ENCODE measurements at regions of chr12 and their contacts with region 1.

Region 1: DNA sequence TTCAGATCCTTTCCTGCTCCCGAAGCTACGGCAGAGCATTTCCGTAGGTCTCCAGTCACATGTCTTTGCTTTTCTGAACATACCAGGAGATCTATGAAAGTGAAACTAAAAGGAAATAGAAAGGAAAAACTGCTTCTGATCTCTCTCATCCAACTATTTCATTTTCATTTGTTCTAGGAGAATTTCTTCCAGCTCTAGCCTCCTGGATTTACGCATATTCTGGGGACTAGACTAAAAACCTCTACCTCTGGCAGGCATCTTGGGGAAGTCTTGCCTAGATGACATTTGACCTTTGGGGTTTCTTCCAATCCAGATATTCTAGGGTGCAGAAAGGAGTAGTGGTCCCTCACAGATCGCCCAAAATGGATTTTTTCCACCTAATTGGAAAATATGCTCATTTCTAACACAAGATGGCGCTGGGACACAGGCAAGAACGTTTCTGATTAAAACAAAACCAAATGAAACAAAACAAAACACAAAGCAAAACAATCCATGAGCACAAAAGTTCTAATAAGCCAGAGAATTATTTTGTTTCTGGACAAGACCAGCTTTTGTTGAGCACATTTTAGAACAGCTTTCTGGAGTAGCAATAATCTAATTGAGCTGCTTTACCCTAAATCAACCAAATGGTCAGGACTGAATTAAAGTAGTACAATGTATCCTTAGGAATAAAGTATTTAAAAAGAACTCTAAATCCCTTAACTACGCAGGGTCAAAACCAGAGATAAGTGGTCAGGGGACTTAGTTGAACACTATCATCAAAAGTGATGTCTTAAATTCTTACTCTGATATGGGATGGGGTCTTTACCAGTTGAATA is 12.3 kb upstream of the PARP11 start:
- DNase-seq: peak in 7 of 9 donors; percentile 55 to 78 (median 69)
- ATAC-seq: peak; percentile 69
- H3K4me3 ChIP-seq: no peak overlapping the region
- H3K4me3 Mint-ChIP-seq: peak overlapping the region in 7 of 10 donors; percentile 1 to 61 (median 26)
- H3K27ac ChIP-seq: no peak overlapping the region
- H3K27ac Mint-ChIP-seq: peak overlapping the region in 8 of 9 donors; percentile 45 to 93 (median 66)
- H3K4me1 ChIP-seq: no peaks in the 10 kb centered on the region
- H3K4me1 Mint-ChIP-seq: peaks cover 6 to 26% (median 16%) of the 10 kb centered on the region in 7 donors
- H3K27me3 ChIP-seq: no peaks in the 10 kb centered on the region
- H3K27me3 Mint-ChIP-seq: peaks cover 0 to 10% (median 0%) of the 10 kb centered on the region in 5 donors

Region 2: DNA sequence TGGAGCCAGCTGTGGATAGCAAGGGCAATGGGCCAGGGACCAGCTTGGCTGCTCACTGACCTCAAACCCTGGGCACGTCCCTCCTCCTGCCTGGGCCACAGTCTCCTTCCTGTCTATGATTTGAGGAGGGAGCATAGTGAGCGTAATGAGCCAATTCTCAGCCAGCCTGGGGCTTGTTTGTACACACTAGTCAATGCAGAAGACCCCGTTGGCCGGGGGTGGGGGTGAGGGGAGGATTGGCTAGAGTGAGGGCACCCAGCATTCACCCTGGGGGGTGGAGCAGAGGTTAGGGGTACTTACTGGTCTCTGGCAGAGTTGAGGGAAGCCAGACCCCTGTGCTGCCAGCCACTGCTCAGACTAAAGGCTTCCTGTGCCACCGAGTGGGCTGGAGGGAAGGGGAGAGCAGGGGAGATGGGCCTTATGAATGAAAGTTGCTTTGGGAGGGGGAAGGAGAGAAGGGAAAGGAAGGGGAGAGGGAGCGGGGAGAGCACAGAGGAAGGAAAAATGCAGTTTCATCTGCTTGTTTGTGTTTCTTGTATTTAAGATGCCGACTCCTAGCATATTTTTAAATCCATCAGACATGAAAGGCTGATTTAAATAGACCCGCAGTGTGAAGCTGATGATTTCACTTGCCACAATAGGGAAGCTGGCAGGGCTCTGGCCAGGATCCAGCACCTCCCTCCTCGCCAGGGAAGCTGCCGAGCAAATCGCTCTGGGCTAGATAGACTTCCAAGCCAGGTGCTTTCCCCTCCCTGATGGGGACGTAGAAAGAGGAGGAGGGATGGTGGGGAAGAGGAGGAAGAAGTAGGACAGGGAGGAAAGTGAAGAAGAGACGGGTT is 280.5 kb before region 1 on chr12:
- CTCF ChIA-PET with region 1: no interaction called
- POLR2A ChIA-PET with region 1: no interaction called
- intact Hi-C with region 1: no loop called
- DNase-seq: no peak
- ATAC-seq: no peak
- H3K4me3 ChIP-seq: no peak overlapping the region
- H3K4me3 Mint-ChIP-seq: no peak overlapping the region
- H3K27ac ChIP-seq: no peak overlapping the region
- H3K27ac Mint-ChIP-seq: no peak overlapping the region
- H3K4me1 ChIP-seq: no peaks in the 10 kb centered on the region
- H3K4me1 Mint-ChIP-seq: peaks cover 0 to 14% (median 6%) of the 10 kb centered on the region in 7 donors
- H3K27me3 ChIP-seq: no peaks in the 10 kb centered on the region
- H3K27me3 Mint-ChIP-seq: peaks cover 0 to 20% (median 0%) of the 10 kb centered on the region in 5 donors

Region 3: GRCh38 chr12:3896801-3897331 is 11.4 kb after region 1 on chr12:
- CTCF ChIA-PET with region 1: interaction called, 30 read pairs
- POLR2A ChIA-PET with region 1: interaction called, 28 read pairs
- intact Hi-C with region 1: loop called (anchors 1 to 2 kb)
- DNase-seq: no peak
- ATAC-seq: peak; percentile 66
- H3K4me3 ChIP-seq: peak overlapping the region; percentile 38
- H3K4me3 Mint-ChIP-seq: peak overlapping the region; percentile 68 to 89 (median 78)
- H3K27ac ChIP-seq: peak overlapping the region; percentile 71
- H3K27ac Mint-ChIP-seq: peak overlapping the region in 8 of 9 donors; percentile 94 to 98 (median 97)
- H3K4me1 ChIP-seq: peaks cover 44 to 84% of the 10 kb centered on the region in 2 donors
- H3K4me1 Mint-ChIP-seq: peaks cover 2 to 58% (median 45%) of the 10 kb centered on the region in 7 donors
- H3K27me3 ChIP-seq: no peaks in the 10 kb centered on the region
- H3K27me3 Mint-ChIP-seq: no peaks in the 10 kb centered on the region

Region 4: GRCh38 chr12:3931746-3932145 is 46.3 kb after region 1 on chr12:
- CTCF ChIA-PET with region 1: interaction called, 12 read pairs
- POLR2A ChIA-PET with region 1: interaction called, 13 read pairs
- intact Hi-C with region 1: loop called in 1 of 2 experiments (anchors 1 kb)
- DNase-seq: no peak
- ATAC-seq: no peak
- H3K4me3 ChIP-seq: no peak overlapping the region
- H3K4me3 Mint-ChIP-seq: peak overlapping the region in 3 of 10 donors; percentile 7 to 81 (median 27)
- H3K27ac ChIP-seq: no peak overlapping the region
- H3K27ac Mint-ChIP-seq: peak overlapping the region in 6 of 9 donors; percentile 51 to 89 (median 74)
- H3K4me1 ChIP-seq: peaks cover 0 to 46% of the 10 kb centered on the region in 2 donors
- H3K4me1 Mint-ChIP-seq: peaks cover 29 to 82% (median 73%) of the 10 kb centered on the region in 7 donors
- H3K27me3 ChIP-seq: no peaks in the 10 kb centered on the region
- H3K27me3 Mint-ChIP-seq: peaks cover 0 to 16% (median 0%) of the 10 kb centered on the region in 5 donors

Region 5: GRCh38 chr12:3988519-3989448 is 103.3 kb after region 1 on chr12:
- CTCF ChIA-PET with region 1: interaction called, 127 read pairs
- POLR2A ChIA-PET with region 1: interaction called, 16 read pairs
- intact Hi-C with region 1: loop called in 1 of 2 experiments (anchors 2 kb)
- DNase-seq: peak in 7 of 9 donors; percentile 33 to 71 (median 62)
- ATAC-seq: peak; percentile 87
- H3K4me3 ChIP-seq: peak overlapping the region; percentile 20
- H3K4me3 Mint-ChIP-seq: peak overlapping the region; percentile 62 to 75 (median 70)
- H3K27ac ChIP-seq: peak overlapping the region; percentile 61
- H3K27ac Mint-ChIP-seq: peak overlapping the region; percentile 81 to 95 (median 91)
- H3K4me1 ChIP-seq: peaks cover 9 to 21% of the 10 kb centered on the region in 2 donors
- H3K4me1 Mint-ChIP-seq: peaks cover 12 to 52% (median 37%) of the 10 kb centered on the region in 7 donors
- H3K27me3 ChIP-seq: no peaks in the 10 kb centered on the region
- H3K27me3 Mint-ChIP-seq: peaks cover 0 to 15% (median 0%) of the 10 kb centered on the region in 5 donors

Region 6: GRCh38 chr12:4030929-4031702 is 145.6 kb after region 1 on chr12:
- CTCF ChIA-PET with region 1: interaction called, 100 read pairs
- POLR2A ChIA-PET with region 1: interaction called, 14 read pairs
- intact Hi-C with region 1: loop called in 1 of 2 experiments (anchors 2 kb)
- DNase-seq: peak; percentile 62 to 83 (median 74)
- ATAC-seq: peak; percentile 95
- H3K4me3 ChIP-seq: peak overlapping the region; percentile 50
- H3K4me3 Mint-ChIP-seq: peak overlapping the region; percentile 60 to 87 (median 84)
- H3K27ac ChIP-seq: peak overlapping the region; percentile 75
- H3K27ac Mint-ChIP-seq: peak overlapping the region in 8 of 9 donors; percentile 60 to 92 (median 86)
- H3K4me1 ChIP-seq: peaks cover 13 to 33% of the 10 kb centered on the region in 2 donors
- H3K4me1 Mint-ChIP-seq: peaks cover 22 to 54% (median 47%) of the 10 kb centered on the region in 7 donors
- H3K27me3 ChIP-seq: no peaks in the 10 kb centered on the region
- H3K27me3 Mint-ChIP-seq: peaks cover 0 to 33% (median 0%) of the 10 kb centered on the region in 5 donors

Region 7: GRCh38 chr12:4107436-4107878 is 222.0 kb after region 1 on chr12:
- CTCF ChIA-PET with region 1: interaction called, 6 read pairs
- POLR2A ChIA-PET with region 1: no interaction called
- intact Hi-C with region 1: loop called (anchors 1 to 2 kb)
- DNase-seq: peak in 8 of 9 donors; percentile 57 to 83 (median 76)
- ATAC-seq: peak; percentile 99
- H3K4me3 ChIP-seq: no peak overlapping the region
- H3K4me3 Mint-ChIP-seq: peak overlapping the region in 7 of 10 donors; percentile 21 to 74 (median 52)
- H3K27ac ChIP-seq: no peak overlapping the region
- H3K27ac Mint-ChIP-seq: peak overlapping the region in 8 of 9 donors; percentile 6 to 88 (median 55)
- H3K4me1 ChIP-seq: peaks cover 0 to 3% of the 10 kb centered on the region in 2 donors
- H3K4me1 Mint-ChIP-seq: peaks cover 6 to 51% (median 13%) of the 10 kb centered on the region in 7 donors
- H3K27me3 ChIP-seq: no peaks in the 10 kb centered on the region
- H3K27me3 Mint-ChIP-seq: peaks cover 0 to 7% (median 0%) of the 10 kb centered on the region in 5 donors

Measured in naive thymus-derived CD4-positive, alpha-beta T cell (primary cell).